ENCODE measurements at regions of chr11 and their contacts with region 1.

Region 1: DNA sequence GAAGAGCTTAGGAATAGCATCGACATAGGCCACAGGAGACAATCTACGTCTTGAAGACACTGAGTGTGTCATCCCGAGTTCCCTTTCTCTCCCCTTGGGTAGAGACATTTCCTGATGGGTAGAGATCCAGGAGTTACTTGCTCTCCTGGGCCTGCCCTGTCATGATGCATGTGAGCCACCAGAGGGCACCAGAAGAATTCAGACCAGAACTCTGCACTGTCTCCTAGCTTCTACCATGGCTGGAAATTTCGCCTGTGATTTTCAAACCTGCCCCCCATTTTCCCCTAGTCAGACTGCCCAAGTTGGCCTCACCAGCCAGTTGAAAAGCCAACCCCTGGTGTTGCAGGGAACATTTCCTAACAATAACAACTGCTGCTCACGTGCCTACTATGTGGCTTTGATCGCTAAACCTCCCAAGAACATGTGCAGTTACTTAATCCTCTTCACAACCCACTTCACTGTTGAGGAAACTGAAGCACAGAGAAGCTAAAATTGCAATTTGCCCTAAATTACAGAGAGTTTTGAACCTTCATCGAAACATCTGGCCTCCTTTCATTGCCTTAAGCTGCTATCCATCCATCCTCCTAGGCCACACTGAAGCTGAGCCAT is 47.2 kb downstream of the C11orf58 start:
- DNase-seq: peak; percentile 46 to 56
- ATAC-seq: peak; percentile 78
- H3K4me3 ChIP-seq: no peak overlapping the region
- H3K27ac ChIP-seq: no peak overlapping the region
- H3K4me1 ChIP-seq: peaks cover 3% of the 10 kb centered on the region in 2 donors
- H3K27me3 ChIP-seq: no peaks in the 10 kb centered on the region
- CTCF ChIP-seq: peak; percentile 62 to 85 (median 75)
- POLR2A ChIP-seq: no peak

Region 2: DNA sequence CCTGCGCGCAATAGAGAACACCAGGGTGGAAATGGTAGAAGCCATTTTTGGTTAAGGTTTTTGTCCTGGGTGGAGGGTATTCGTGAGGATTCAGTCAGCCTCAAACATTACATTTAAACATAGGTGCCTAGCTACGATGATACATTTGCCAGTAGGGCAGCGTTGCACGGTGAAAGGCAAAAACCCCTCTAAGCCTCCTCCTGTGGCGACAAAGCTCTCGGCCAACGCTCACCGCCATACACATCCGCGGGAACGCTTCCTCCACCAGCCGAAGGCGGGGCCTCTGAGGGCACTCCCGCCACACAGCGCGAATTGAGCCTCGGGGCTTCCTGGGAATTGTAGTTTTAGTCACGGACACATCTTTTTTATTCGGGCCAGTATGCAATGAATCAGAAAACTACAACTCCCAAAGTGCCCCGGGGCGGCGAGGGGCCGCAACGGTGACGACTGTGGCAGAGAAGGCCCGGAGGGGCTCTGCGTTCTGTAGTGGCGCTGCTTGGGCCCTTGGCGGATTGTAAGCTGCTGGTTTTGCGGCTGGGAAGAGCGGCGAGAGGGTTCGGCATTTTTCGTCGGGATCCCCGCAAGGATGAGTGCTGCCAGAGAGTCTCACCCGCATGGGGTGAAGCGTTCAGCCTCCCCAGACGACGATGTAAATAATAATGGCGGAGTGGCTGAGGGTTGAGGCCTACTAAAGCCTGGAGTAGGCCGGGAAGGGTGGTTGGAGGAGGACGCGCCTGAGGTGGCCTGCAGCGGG is 47.3 kb before region 1 on chr11 and contains the start of gene C11orf58:
- in situ Hi-C with region 1: no loop called
- intact Hi-C with region 1: no loop called
- DNase-seq: peak; percentile 94 to 97
- ATAC-seq: peak; percentile 97 to 98
- H3K4me3 ChIP-seq: peak within 1 kb of the TSS; percentile 78 to 91 (median 87)
- H3K27ac ChIP-seq: peak within 1 kb of the TSS; percentile 94 to 97 (median 94)
- H3K4me1 ChIP-seq: peaks cover 37 to 41% of the 10 kb centered on the region in 2 donors
- H3K27me3 ChIP-seq: no peaks in the 10 kb centered on the region
- CTCF ChIP-seq: peak in 1 of 5 experiments; percentile 13
- POLR2A ChIP-seq: peak; percentile 94 to 95
- total RNA-seq, gene C11orf58: 103 to 170 (median 134) TPM

Region 3: DNA sequence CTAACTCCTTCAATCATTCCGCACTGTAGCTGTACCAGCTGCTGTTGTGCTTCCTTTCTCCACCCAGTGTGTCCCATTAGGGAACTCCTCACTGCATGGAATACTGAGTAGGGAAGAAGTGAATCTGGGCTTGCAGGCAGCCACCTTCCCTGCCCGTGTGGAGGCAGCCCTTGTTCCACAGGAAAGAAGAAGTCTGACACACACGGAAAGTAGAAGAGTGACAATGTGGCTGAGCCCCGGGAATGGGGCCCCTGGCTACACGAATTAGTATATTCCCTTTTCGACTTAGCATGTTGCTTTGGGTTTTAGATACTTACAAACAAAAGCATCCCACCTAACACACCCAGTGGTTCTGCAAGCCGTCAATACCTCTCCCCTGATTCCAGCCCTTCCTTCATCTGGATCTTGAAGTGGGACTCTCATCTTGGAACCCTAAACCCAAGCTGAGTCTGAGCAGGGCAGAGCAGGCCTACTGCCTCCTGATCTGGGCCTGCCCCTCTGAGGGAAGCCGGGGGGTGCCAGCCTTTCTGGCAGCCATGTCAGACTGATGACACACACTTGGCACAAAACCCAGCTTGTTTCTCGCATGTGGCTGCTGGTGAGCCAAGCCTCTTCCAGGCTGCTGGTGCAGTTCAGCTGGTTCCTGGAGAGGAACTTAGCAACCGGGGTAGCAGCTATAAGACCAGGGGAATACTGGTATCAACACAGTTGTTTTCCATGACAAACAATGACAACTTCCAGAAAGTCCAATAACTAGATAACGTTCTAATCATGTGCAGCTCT is 24.5 kb after region 1 on chr11:
- in situ Hi-C with region 1: no loop called
- intact Hi-C with region 1: no loop called
- DNase-seq: no peak
- ATAC-seq: no peak
- H3K4me3 ChIP-seq: no peak overlapping the region
- H3K27ac ChIP-seq: no peak overlapping the region
- H3K4me1 ChIP-seq: peaks cover 12 to 24% of the 10 kb centered on the region in 2 donors
- H3K27me3 ChIP-seq: no peaks in the 10 kb centered on the region
- CTCF ChIP-seq: no peak
- POLR2A ChIP-seq: no peak

Region 4: DNA sequence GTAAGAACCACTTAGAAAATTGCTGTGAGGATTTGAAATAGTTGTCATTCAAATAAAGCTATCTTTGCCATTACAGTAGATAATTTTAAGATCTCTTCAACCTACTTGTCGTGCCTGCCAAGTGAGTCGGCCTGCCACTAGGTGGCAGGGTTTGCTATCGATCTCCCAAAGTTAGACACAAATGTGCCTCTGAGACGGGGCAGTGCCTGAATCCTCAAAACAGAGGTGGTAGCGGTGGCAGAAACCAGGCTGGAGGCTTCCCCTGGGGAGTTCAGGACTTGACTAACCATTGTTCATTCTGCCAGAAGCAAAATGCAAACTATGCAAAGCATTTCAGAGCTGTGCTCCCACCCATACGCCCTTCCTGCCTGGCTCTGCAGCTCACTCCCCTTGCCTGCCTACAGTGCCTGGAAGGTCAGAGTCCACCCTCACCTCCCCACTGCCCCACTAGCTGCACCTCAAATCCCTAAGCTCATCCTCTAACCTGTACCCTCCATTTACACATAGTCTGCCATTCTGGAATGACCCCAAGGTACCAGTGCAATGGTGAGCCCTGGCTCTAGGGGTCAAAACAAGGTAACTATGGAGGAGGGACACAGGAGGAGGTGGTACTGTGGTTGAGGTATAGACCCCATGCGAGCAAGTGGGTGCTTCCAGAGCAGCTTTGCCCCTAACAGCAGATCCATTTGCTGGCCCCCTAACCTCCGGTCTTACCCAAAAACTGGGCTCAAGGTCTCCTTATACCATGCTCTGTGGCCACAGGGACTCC is 34.9 kb after region 1 on chr11:
- in situ Hi-C with region 1: no loop called
- intact Hi-C with region 1: loop called (anchors 2 kb)
- DNase-seq: peak; percentile 48 to 69
- ATAC-seq: peak; percentile 72 to 84
- H3K4me3 ChIP-seq: no peak overlapping the region
- H3K27ac ChIP-seq: no peak overlapping the region
- H3K4me1 ChIP-seq: peaks cover 7 to 15% of the 10 kb centered on the region in 2 donors
- H3K27me3 ChIP-seq: no peaks in the 10 kb centered on the region
- CTCF ChIP-seq: peak; percentile 50 to 87 (median 75)
- POLR2A ChIP-seq: no peak

Region 5: GRCh38 chr11:16881074-16881709 is 95.6 kb after region 1 on chr11:
- in situ Hi-C with region 1: no loop called
- intact Hi-C with region 1: loop called (anchors 2 kb)
- DNase-seq: peak; percentile 67 to 81
- ATAC-seq: peak; percentile 99
- H3K4me3 ChIP-seq: no peak overlapping the region
- H3K27ac ChIP-seq: peak overlapping the region in 1 of 4 donors; percentile 11
- H3K4me1 ChIP-seq: peaks cover 14 to 16% of the 10 kb centered on the region in 2 donors
- H3K27me3 ChIP-seq: no peaks in the 10 kb centered on the region
- CTCF ChIP-seq: peak in 4 of 5 experiments; percentile 43 to 54 (median 45)
- POLR2A ChIP-seq: no peak